ENCODE measurements at regions of chr15 and their contacts with region 1.

Region 1: GRCh38 chr15:33700695-33701304 is 267.5 kb upstream of the CHRM5 start:
- DNase-seq: peak; percentile 32 to 69
- ATAC-seq: peak; percentile 94 to 96
- H3K4me3 ChIP-seq: no peak overlapping the region
- H3K27ac ChIP-seq: no peak overlapping the region
- H3K4me1 ChIP-seq: peaks cover 6 to 12% of the 10 kb centered on the region in 2 donors
- H3K27me3 ChIP-seq: no peaks in the 10 kb centered on the region
- CTCF ChIP-seq: peak; percentile 71 to 88 (median 86)
- POLR2A ChIP-seq: no peak

Region 2: GRCh38 chr15:32717426-32718226 is 983.2 kb before region 1 on chr15 and contains the start of gene GREM1:
- in situ Hi-C with region 1: no loop called
- intact Hi-C with region 1: no loop called
- DNase-seq: no peak
- ATAC-seq: no peak
- H3K4me3 ChIP-seq: peak within 1 kb of the TSS; percentile 22 to 52 (median 36)
- H3K27ac ChIP-seq: peak within 1 kb of the TSS in 1 of 4 donors; percentile 28
- H3K4me1 ChIP-seq: no peaks in the 10 kb centered on the region
- H3K27me3 ChIP-seq: peaks cover 51 to 67% (median 66%) of the 10 kb centered on the region in 3 donors
- CTCF ChIP-seq: no peak
- POLR2A ChIP-seq: no peak
- total RNA-seq, gene GREM1: 0.31 to 1.0 (median 0.41) TPM in 3 of 4 donors, not detected in the other

Region 3: GRCh38 chr15:33292717-33293307 is 408.0 kb before region 1 on chr15:
- in situ Hi-C with region 1: loop called (anchors 5 to 10 kb)
- intact Hi-C with region 1: loop called (anchors 1 kb)
- DNase-seq: peak in 1 of 2 donors; percentile 25
- ATAC-seq: peak; percentile 63 to 67
- H3K4me3 ChIP-seq: no peak overlapping the region
- H3K27ac ChIP-seq: peak overlapping the region in 1 of 4 donors; percentile 69
- H3K4me1 ChIP-seq: peaks cover 0 to 5% of the 10 kb centered on the region in 2 donors
- H3K27me3 ChIP-seq: no peaks in the 10 kb centered on the region
- CTCF ChIP-seq: peak; percentile 56 to 70 (median 61)
- POLR2A ChIP-seq: no peak

Region 4: DNA sequence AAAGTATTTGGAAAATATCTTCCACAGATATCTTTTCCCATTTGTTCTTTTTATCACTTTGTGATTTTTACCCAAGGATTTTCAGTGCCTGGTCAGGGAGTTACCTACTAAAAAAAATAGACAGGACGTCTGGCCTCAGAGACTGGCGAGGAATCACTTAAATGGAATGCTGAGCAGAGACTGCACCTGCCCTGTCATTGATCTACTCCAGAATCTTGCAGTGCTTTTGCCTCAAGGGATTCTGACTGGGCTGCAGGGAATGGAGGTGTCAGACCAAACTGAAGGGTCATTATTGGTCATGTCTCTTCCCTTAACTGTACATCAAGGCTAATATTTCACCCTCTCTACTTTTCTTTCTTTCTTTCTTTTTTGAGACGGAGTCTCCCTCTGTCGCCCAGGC is 402.2 kb before region 1 on chr15:
- in situ Hi-C with region 1: loop called (anchors 5 to 10 kb)
- intact Hi-C with region 1: no loop called
- DNase-seq: no peak
- ATAC-seq: no peak
- H3K4me3 ChIP-seq: no peak overlapping the region
- H3K27ac ChIP-seq: peak overlapping the region in 1 of 4 donors; percentile 17
- H3K4me1 ChIP-seq: no peaks in the 10 kb centered on the region
- H3K27me3 ChIP-seq: no peaks in the 10 kb centered on the region
- CTCF ChIP-seq: no peak
- POLR2A ChIP-seq: no peak

Region 5: DNA sequence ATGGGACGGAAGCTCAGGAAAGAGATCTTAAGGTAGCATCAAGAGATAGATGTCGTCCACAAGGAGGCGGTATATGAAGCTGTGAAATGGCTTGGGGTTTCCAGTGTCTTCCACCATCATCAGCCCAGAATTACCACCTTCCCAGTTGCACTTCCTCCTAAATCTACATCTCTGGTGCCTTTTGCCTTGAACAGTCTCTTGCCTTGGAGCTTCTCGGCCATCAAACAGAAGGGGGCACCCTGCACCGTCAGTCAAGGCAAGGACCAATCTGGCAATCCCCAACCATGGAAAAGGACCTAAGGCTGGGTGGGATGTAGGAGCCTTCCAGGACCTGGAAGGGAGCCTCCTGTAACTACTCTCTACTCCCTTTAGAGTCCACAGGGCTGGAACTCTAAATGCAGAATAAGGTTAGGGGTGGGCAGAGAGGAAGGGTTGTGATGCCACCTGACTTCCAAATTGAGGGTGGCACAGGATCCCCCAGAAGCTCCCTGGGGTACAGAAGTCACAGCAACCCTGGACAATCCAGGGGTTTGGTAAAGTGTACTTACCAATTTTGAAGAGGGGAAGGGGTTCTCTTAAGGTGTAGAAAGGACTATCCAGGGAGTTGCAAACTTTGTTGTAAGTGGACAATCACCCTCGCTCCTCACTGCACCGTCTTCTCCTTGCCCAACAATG is 391.1 kb before region 1 on chr15:
- in situ Hi-C with region 1: no loop called
- intact Hi-C with region 1: loop called (anchors 1 kb)
- DNase-seq: peak in 1 of 2 donors; percentile 54
- ATAC-seq: peak; percentile 60 to 73
- H3K4me3 ChIP-seq: peak overlapping the region in 3 of 4 donors; percentile 50 to 65 (median 60)
- H3K27ac ChIP-seq: peak overlapping the region in 1 of 4 donors; percentile 81
- H3K4me1 ChIP-seq: peaks cover 0 to 17% of the 10 kb centered on the region in 2 donors
- H3K27me3 ChIP-seq: no peaks in the 10 kb centered on the region
- CTCF ChIP-seq: peak; percentile 29 to 63 (median 42)
- POLR2A ChIP-seq: no peak

Region 6: DNA sequence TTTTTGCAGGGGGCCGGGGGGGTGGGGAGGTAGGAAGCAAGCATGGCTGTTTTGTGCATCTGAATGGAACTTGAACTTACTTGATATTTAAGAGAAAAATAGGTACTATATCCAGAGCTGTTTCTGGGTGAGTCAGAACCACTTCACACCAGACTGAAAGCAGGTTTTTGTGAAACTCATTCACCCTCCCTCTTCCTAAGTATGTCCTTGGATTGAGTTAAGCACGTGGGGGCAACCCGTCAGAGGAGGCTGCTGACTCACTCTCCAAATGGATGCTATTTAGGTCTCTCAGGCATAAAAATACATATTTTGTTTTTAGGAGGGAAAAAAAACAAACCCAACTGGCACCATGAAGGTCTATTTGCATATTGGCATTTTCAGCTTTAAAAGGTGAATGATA is 119.8 kb before region 1 on chr15:
- in situ Hi-C with region 1: no loop called
- intact Hi-C with region 1: no loop called
- DNase-seq: no peak
- ATAC-seq: no peak
- H3K4me3 ChIP-seq: no peak overlapping the region
- H3K27ac ChIP-seq: no peak overlapping the region
- H3K4me1 ChIP-seq: no peaks in the 10 kb centered on the region
- H3K27me3 ChIP-seq: no peaks in the 10 kb centered on the region
- CTCF ChIP-seq: no peak
- POLR2A ChIP-seq: no peak

Region 7: DNA sequence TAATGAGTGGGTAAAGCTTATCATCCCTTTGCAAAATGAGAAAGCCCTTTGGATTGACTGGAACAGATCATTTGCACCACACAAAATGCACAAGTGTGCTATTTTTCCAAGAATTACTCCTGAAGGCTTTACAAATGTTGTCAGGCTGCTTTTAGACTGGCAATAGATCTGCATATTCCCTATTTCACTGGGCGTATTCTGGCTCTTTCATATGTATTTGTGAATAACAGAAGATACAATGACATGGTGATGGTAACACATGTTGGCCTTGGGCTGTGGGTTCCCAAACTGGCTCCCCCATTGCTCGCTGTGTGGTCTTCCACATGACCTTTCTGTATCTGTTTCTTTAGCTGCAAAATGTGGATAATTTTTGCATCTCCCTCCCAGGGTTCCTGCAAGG is 35.9 kb before region 1 on chr15:
- in situ Hi-C with region 1: no loop called
- intact Hi-C with region 1: no loop called
- DNase-seq: no peak
- ATAC-seq: no peak
- H3K4me3 ChIP-seq: no peak overlapping the region
- H3K27ac ChIP-seq: no peak overlapping the region
- H3K4me1 ChIP-seq: no peaks in the 10 kb centered on the region
- H3K27me3 ChIP-seq: no peaks in the 10 kb centered on the region
- CTCF ChIP-seq: no peak
- POLR2A ChIP-seq: no peak

Region 8: GRCh38 chr15:33680336-33680735 is 20.5 kb before region 1 on chr15:
- in situ Hi-C with region 1: no loop called
- intact Hi-C with region 1: loop called (anchors 2 kb)
- DNase-seq: peak; percentile 40 to 57
- ATAC-seq: peak; percentile 93
- H3K4me3 ChIP-seq: no peak overlapping the region
- H3K27ac ChIP-seq: peak overlapping the region; percentile 57 to 82 (median 69)
- H3K4me1 ChIP-seq: peaks cover 11 to 28% of the 10 kb centered on the region in 2 donors
- H3K27me3 ChIP-seq: no peaks in the 10 kb centered on the region
- CTCF ChIP-seq: no peak
- POLR2A ChIP-seq: no peak

Region 9: DNA sequence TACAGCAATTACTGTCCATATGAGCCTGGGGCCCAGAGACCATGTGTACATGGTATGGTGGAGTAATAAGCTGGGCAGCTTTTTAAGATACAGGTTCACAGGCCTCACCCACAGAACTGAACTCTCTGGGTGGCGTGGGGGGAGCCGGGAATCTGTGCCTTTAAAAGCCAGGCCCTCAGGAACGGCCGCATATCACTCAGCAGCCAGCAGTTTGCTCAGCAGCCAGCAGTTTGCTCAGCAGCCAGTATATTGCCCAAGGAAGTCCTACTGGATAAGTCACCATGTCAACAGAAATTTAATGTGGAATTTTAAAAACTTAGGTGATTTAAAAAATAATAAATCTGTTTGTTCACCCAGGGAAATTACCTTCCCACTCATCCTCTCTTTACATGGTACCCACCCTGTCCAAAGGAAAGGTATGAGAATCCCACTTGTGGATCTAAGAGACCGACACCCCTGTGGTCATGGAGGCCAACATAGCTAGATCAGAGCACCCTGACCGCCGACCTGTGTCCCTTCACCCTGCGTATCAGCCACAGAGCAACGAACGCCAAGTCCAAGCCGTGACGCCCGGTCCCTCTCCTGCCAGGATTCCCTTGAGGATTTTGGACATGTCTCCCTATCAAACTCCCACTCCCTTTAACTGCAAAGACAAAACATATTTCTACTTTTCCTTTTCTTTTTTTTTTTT is 171.8 kb after region 1 on chr15:
- in situ Hi-C with region 1: no loop called
- intact Hi-C with region 1: no loop called
- DNase-seq: no peak
- ATAC-seq: no peak
- H3K4me3 ChIP-seq: no peak overlapping the region
- H3K27ac ChIP-seq: no peak overlapping the region
- H3K4me1 ChIP-seq: no peaks in the 10 kb centered on the region
- H3K27me3 ChIP-seq: no peaks in the 10 kb centered on the region
- CTCF ChIP-seq: no peak
- POLR2A ChIP-seq: no peak

Measured in gastrocnemius medialis (tissue), 4 donors.